Activated CD4-positive, alpha-beta T cell treated with anti-CD3 and anti-CD28 coated beads, Interleukin-2, amount 10 ng/mL, durations not matched to agents 24 days and 14 days (primary cell): ENCODE measurements at regions of chr12 and their contacts with region 1.

Region 1: DNA sequence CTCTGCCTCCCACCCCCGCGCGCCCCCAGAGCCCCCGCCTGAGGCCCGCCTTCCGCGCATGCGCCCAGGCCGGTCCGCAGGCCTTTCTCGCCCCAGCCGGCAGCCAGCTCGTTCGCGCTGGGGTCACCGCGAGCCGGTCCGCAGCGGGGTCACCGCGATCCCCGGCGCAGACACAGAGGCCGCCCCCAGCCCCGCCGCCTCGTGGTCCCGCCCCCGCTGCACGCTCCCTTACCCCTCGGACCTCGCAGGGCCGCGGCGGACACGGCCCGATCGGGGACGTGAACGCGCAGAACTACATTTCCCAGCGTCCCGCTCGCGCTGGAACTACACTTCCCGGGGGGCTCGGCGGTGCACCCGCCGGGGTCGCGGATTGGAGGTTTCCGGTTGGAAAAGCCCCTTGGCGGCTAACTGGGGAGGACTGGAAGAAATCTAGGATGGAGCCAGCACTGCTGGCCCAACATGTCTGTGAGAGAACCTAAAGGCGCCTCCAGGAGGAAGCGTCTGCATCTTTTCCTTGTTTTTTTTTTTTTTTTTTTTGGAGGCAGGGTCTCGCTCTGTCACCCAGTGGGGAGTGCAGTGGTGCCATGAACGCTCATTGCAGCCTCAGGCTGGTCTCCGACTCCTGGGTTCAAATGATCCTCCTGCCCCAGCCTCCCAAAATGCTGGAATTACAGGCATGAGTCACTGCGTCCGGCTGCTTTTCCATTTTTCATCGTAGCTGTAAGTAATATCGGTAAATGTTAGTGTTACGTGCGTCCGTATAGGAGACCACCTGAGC is at the start of gene ZNF605:
- DNase-seq: peak; percentile 96
- H3K4me3 Mint-ChIP-seq: peak within 1 kb of the TSS; percentile 98
- H3K27ac Mint-ChIP-seq: peak within 1 kb of the TSS; percentile 95
- H3K4me1 Mint-ChIP-seq: peaks cover 19% of the 10 kb centered on the region
- H3K27me3 Mint-ChIP-seq: no peaks in the 10 kb centered on the region
- total RNA-seq, gene ZNF605: 6.6 and 7.6 TPM in 2 replicates

Region 2: GRCh38 chr12:132804426-132804861 is 151.8 kb before region 1 on chr12:
- intact Hi-C with region 1: no loop called
- DNase-seq: no peak
- H3K4me3 Mint-ChIP-seq: no peak overlapping the region
- H3K27ac Mint-ChIP-seq: no peak overlapping the region
- H3K4me1 Mint-ChIP-seq: peaks cover 8% of the 10 kb centered on the region
- H3K27me3 Mint-ChIP-seq: no peaks in the 10 kb centered on the region

Region 3: DNA sequence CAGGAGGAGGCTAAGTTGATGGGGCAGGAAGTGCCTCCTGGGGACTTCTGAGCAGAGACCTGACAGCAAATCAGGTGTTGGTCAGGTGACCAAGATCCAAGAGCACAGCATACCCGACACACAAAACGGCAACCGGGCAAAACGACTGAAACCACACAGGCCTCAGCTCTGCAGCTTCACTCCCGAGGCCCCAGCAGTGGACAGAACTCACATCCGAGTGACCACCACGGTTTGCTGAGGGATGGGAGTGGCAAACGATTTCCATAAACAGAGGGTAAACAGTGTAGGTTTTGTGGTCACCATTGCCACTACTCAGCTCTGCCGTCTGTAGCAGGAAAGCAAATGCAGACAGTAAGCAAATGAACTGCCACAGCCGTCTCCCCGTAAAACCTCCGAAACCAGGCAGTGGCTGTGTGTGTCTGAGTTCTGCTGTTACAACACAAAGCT is 83.2 kb before region 1 on chr12:
- intact Hi-C with region 1: no loop called
- DNase-seq: peak; percentile 79
- H3K4me3 Mint-ChIP-seq: peak overlapping the region; percentile 19
- H3K27ac Mint-ChIP-seq: peak overlapping the region; percentile 62
- H3K4me1 Mint-ChIP-seq: peaks cover 14% of the 10 kb centered on the region
- H3K27me3 Mint-ChIP-seq: no peaks in the 10 kb centered on the region

Region 4: GRCh38 chr12:133181238-133181959 is 225.2 kb after region 1 on chr12 and contains the start of gene ZNF268:
- intact Hi-C with region 1: loop called (anchors 1 kb)
- DNase-seq: peak; percentile 98
- H3K4me3 Mint-ChIP-seq: peak within 1 kb of the TSS; percentile 92
- H3K27ac Mint-ChIP-seq: peak within 1 kb of the TSS; percentile 93
- H3K4me1 Mint-ChIP-seq: peaks cover 6% of the 10 kb centered on the region
- H3K27me3 Mint-ChIP-seq: no peaks in the 10 kb centered on the region
- total RNA-seq, gene ZNF268: 17.2 and 19.4 TPM in 2 replicates